ENCODE measurements at regions of chr22 and their contacts with region 1.

Region 1: GRCh38 chr22:19998232-19998951 is 18.2 kb downstream of the ARVCF start:
- DNase-seq: no peak
- ATAC-seq: no peak
- H3K4me3 ChIP-seq: no peak overlapping the region
- H3K27ac ChIP-seq: no peak overlapping the region
- H3K4me1 ChIP-seq: peaks cover 16 to 53% of the 10 kb centered on the region in 2 experiments; a peak in 4 of 5 replicates
- H3K27me3 ChIP-seq: no peaks in the 10 kb centered on the region
- CTCF ChIP-seq: no peak
- EP300 ChIP-seq: no peak
- POLR2A ChIP-seq: no peak
- RAD21 ChIP-seq: no peak

Region 2: GRCh38 chr22:19941365-19942082 is 56.9 kb before region 1 on chr22 and contains the starts of genes COMT and TXNRD2:
- CTCF ChIA-PET with region 1: no interaction called
- POLR2A ChIA-PET with region 1: no interaction called
- in situ Hi-C with region 1: no loop called
- intact Hi-C with region 1: no loop called
- DNase-seq: peak; percentile 96 to 100 (median 100)
- ATAC-seq: peak; percentile 88
- H3K4me3 ChIP-seq: peak within 1 kb of the TSS; percentile 58
- H3K27ac ChIP-seq: peak within 1 kb of the TSS; percentile 88
- H3K4me1 ChIP-seq: peaks cover 35 to 37% of the 10 kb centered on the region in 2 experiments
- H3K27me3 ChIP-seq: no peaks in the 10 kb centered on the region; a peak in 1 of 5 replicates
- CTCF ChIP-seq: peak in 1 of 3 experiments; percentile 34; a peak in 3 of 6 replicates
- EP300 ChIP-seq: peak; percentile 21; the same call in 1 of the 2 replicates
- POLR2A ChIP-seq: no peak
- RAD21 ChIP-seq: no peak
- polyA plus RNA-seq, gene COMT: 12.5 to 39.6 TPM
- polyA plus RNA-seq, gene TXNRD2: 3.3 to 4.4 TPM

Region 3: DNA sequence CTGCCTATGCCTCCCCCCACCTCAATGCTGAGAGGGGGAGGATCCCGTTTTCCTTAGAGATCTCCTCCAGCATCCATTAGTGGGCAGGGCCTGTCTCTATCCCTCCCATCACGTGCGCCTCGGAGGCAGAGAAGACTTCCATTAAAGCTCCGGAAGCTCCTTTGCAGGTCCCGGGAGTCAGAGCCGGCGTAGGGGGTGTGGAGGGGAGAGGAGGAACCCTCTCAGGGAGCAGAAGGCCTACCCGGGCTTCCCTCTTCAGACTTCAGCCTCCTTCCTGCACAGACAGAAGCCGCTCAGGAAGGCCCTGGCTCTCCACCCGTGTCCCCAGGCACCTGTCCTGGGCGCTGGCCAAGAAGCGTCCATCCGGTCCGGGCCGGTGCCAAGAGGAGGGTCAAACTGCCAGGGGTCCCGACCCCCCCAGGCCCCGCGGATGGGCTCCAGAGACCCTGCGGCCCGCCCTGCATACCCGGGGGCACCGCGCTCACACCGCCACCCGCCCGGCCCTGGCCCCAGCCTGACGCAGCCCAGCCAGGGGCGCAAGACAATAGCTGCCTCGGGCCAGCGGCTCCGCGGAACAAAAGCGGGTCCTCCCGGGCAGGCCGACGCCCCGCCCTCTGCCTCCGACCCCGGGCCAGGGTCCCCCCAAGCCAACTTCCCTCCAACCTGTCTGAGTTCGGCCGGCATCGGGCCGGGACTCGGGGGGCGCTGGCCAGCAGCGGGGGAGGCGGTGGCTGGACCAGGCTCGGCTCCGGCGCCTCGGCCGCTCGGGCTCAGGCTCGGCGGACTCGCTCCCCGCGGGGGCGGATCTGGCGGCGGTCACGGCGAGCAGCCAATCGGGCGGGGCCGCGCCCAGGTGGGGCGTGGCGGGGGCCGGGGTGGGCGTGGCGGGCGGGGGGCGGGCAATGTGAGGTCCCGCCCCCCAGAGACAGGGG is 11.7 kb before region 1 on chr22:
- CTCF ChIA-PET with region 1: no interaction called
- POLR2A ChIA-PET with region 1: interaction called, 20 read pairs
- in situ Hi-C with region 1: no loop called
- intact Hi-C with region 1: no loop called
- DNase-seq: peak; percentile 97 to 100 (median 100)
- ATAC-seq: peak; percentile 94
- H3K4me3 ChIP-seq: peak overlapping the region; percentile 48
- H3K27ac ChIP-seq: peak overlapping the region; percentile 43; the same call in 1 of the 3 replicates
- H3K4me1 ChIP-seq: peaks cover 39 to 91% of the 10 kb centered on the region in 2 experiments
- H3K27me3 ChIP-seq: no peaks in the 10 kb centered on the region
- CTCF ChIP-seq: peak in 2 of 3 experiments; percentile 14 to 20; a peak in 1 of 6 replicates
- EP300 ChIP-seq: no peak
- POLR2A ChIP-seq: peak; percentile 56
- RAD21 ChIP-seq: no peak; a peak in 1 of 4 replicates

Region 4: GRCh38 chr22:20008221-20008995 is 10.0 kb after region 1 on chr22:
- CTCF ChIA-PET with region 1: no interaction called
- POLR2A ChIA-PET with region 1: interaction called, 24 read pairs
- in situ Hi-C with region 1: no loop called
- intact Hi-C with region 1: no loop called
- DNase-seq: peak in 1 of 4 experiments; percentile 54
- ATAC-seq: peak; percentile 14
- H3K4me3 ChIP-seq: no peak overlapping the region
- H3K27ac ChIP-seq: no peak overlapping the region
- H3K4me1 ChIP-seq: peaks cover 57 to 64% of the 10 kb centered on the region in 2 experiments
- H3K27me3 ChIP-seq: no peaks in the 10 kb centered on the region
- CTCF ChIP-seq: no peak
- EP300 ChIP-seq: no peak
- POLR2A ChIP-seq: no peak
- RAD21 ChIP-seq: no peak

Measured in K562 (cell line).